ENCODE measurements at regions of chr7 and their contacts with region 1.

Region 1: DNA sequence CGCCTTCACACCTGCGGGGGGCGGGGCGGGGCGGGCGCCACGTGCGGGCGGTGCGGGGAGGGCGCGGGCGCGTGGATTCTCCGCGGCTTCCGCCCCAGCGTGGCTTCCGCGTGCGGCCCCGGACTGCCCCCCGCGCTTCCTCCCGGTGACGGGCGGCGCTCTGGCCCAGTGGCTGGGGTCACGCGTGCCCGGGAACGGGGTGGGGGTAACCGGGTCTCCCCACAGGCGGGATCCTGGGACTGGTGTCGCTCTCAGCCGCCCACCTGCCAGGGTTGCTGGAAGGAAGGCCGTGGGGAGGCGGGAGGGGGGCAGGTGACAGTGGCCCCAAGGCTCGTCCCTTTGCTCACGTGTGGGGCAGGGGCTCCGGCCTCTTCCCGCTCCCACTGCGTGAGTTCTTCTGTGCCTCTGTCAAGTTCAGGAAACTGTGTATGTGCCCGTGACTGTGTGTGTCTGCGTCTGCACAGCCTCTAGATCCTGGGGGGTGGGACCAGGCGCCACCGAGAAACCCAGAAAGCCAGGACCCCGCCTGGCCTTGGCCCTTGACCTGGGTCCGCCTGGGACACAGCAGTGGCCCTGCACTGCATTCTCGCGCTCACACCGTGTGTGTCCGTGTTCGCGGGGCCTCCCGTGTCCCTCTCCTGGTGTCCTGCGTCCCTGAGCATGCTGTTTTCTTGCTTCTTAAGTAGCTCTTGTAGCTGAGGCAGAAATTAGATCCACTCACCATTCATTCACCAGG is 909 bp downstream of the MAFK start:
- DNase-seq: no peak
- H3K4me3 ChIP-seq: peak overlapping the region; percentile 52
- H3K27ac ChIP-seq: peak overlapping the region; percentile 41
- H3K4me1 ChIP-seq: peaks cover 32% of the 10 kb centered on the region
- H3K27me3 ChIP-seq: no peaks in the 10 kb centered on the region
- CTCF ChIP-seq: no peak

Region 2: DNA sequence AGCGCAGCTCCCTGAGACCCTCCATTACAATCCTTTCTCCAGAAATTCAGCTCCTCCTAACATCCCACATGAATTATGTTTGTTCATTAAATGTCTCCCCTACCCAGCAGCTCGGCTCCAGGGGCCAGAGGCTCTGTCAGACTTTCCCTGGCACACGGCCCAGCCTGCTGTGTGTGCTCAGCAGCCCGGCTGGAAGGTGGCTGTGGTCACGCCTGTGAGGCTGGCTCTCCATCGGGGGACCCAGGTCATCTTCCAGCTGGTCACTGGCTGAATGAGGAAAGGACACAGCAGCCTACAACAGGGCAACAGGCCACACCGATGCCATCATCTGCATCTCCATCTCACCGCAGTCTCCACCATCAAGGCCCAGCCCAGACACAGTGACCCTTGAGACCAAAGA is 481.6 kb after region 1 on chr7:
- CTCF ChIA-PET with region 1: no interaction called
- POLR2A ChIA-PET with region 1: no interaction called
- intact Hi-C with region 1: no loop called
- DNase-seq: peak; percentile 33
- H3K4me3 ChIP-seq: no peak overlapping the region
- H3K27ac ChIP-seq: no peak overlapping the region
- H3K4me1 ChIP-seq: peaks cover 5% of the 10 kb centered on the region
- H3K27me3 ChIP-seq: no peaks in the 10 kb centered on the region
- CTCF ChIP-seq: no peak

Region 3: GRCh38 chr7:2281541-2281940 is 750.1 kb after region 1 on chr7:
- CTCF ChIA-PET with region 1: no interaction called
- POLR2A ChIA-PET with region 1: interaction called, 11 read pairs
- intact Hi-C with region 1: no loop called
- DNase-seq: no peak
- H3K4me3 ChIP-seq: no peak overlapping the region
- H3K27ac ChIP-seq: no peak overlapping the region
- H3K4me1 ChIP-seq: no peaks in the 10 kb centered on the region
- H3K27me3 ChIP-seq: no peaks in the 10 kb centered on the region
- CTCF ChIP-seq: no peak

Measured in A673 (cell line).